Activated naive CD4-positive, alpha-beta T cell treated with anti-CD3 and anti-CD28 coated beads, Interleukin-2, amount 10 ng/mL, durations not matched to agents 7 days and 5 days (primary cell): ENCODE measurements at regions of chr19 and their contacts with region 1.

Region 1: DNA sequence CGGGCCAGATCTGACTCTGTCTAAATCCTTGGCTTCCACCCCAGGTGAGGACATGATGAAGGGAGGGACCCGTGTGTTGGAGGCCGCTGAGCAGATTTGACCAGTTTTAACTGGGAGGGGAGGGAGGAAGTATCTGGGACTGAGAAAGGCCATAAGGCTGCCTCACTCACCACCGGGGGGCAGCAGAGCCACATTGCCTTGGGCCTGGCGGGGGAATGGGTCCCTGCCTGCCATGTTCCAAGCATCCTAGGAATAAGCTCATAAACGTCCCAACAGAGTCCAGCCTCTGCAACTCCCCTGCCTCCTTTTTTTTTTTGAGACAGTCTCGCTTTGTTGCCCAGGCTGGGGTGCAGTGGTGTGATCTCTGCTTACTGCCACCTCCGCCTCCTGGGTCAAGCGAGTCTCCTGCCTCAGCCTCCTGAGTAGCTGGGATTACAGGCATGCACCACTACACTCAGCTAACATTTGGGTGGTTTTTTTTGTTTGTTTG is 15.5 kb downstream of the MAST3 start:
- DNase-seq: peak; percentile 87
- H3K4me3 Mint-ChIP-seq: no peak overlapping the region
- H3K27ac Mint-ChIP-seq: no peak overlapping the region
- H3K4me1 Mint-ChIP-seq: peaks cover 33% of the 10 kb centered on the region
- H3K27me3 Mint-ChIP-seq: peaks cover 12% of the 10 kb centered on the region

Region 2: GRCh38 chr19:18102916-18103542 is 10.0 kb before region 1 on chr19:
- CTCF ChIA-PET with region 1: interaction called, 13 read pairs
- DNase-seq: no peak
- H3K4me3 Mint-ChIP-seq: no peak overlapping the region
- H3K27ac Mint-ChIP-seq: no peak overlapping the region
- H3K4me1 Mint-ChIP-seq: peaks cover 34% of the 10 kb centered on the region
- H3K27me3 Mint-ChIP-seq: peaks cover 37% of the 10 kb centered on the region

Region 3: GRCh38 chr19:18152444-18152816 is 39.4 kb after region 1 on chr19:
- CTCF ChIA-PET with region 1: interaction called, 27 read pairs
- DNase-seq: peak; percentile 100
- H3K4me3 Mint-ChIP-seq: peak overlapping the region; percentile 80
- H3K27ac Mint-ChIP-seq: peak overlapping the region; percentile 98
- H3K4me1 Mint-ChIP-seq: peaks cover 30% of the 10 kb centered on the region
- H3K27me3 Mint-ChIP-seq: no peaks in the 10 kb centered on the region

Region 4: GRCh38 chr19:18167975-18168645 is 55.1 kb after region 1 on chr19:
- CTCF ChIA-PET with region 1: interaction called, 57 read pairs
- DNase-seq: peak; percentile 79
- H3K4me3 Mint-ChIP-seq: no peak overlapping the region
- H3K27ac Mint-ChIP-seq: no peak overlapping the region
- H3K4me1 Mint-ChIP-seq: peaks cover 8% of the 10 kb centered on the region
- H3K27me3 Mint-ChIP-seq: no peaks in the 10 kb centered on the region